Activated CD4-positive, alpha-beta memory T cell treated with anti-CD3 and anti-CD28 coated beads, Interleukin-2, amount 10 ng/mL, durations not matched to agents 7 days and 5 days (primary cell): ENCODE measurements at regions of chr19 and their contacts with region 1.

Region 1: GRCh38 chr19:6372594-6373095 is at the start of gene ALKBH7:
- DNase-seq: peak; percentile 97
- H3K4me3 Mint-ChIP-seq: peak within 1 kb of the TSS; percentile 87
- H3K27ac Mint-ChIP-seq: peak within 1 kb of the TSS; percentile 94
- H3K4me1 Mint-ChIP-seq: peaks cover 13% of the 10 kb centered on the region
- H3K27me3 Mint-ChIP-seq: no peaks in the 10 kb centered on the region
- total RNA-seq, gene ALKBH7: 52.0 to 52.5 TPM

Region 2: GRCh38 chr19:5850189-5850588 is 522.5 kb before region 1 on chr19:
- CTCF ChIA-PET with region 1: no interaction called
- POLR2A ChIA-PET with region 1: no interaction called
- DNase-seq: no peak
- H3K4me3 Mint-ChIP-seq: no peak overlapping the region
- H3K27ac Mint-ChIP-seq: no peak overlapping the region
- H3K4me1 Mint-ChIP-seq: no peaks in the 10 kb centered on the region
- H3K27me3 Mint-ChIP-seq: peaks cover 4% of the 10 kb centered on the region

Region 3: GRCh38 chr19:6362027-6362350 is 10.7 kb before region 1 on chr19:
- CTCF ChIA-PET with region 1: interaction called, 8 read pairs
- POLR2A ChIA-PET with region 1: interaction called, 34 read pairs
- DNase-seq: no peak
- H3K4me3 Mint-ChIP-seq: peak overlapping the region; percentile 87
- H3K27ac Mint-ChIP-seq: peak overlapping the region; percentile 93
- H3K4me1 Mint-ChIP-seq: peaks cover 18% of the 10 kb centered on the region
- H3K27me3 Mint-ChIP-seq: no peaks in the 10 kb centered on the region

Region 4: DNA sequence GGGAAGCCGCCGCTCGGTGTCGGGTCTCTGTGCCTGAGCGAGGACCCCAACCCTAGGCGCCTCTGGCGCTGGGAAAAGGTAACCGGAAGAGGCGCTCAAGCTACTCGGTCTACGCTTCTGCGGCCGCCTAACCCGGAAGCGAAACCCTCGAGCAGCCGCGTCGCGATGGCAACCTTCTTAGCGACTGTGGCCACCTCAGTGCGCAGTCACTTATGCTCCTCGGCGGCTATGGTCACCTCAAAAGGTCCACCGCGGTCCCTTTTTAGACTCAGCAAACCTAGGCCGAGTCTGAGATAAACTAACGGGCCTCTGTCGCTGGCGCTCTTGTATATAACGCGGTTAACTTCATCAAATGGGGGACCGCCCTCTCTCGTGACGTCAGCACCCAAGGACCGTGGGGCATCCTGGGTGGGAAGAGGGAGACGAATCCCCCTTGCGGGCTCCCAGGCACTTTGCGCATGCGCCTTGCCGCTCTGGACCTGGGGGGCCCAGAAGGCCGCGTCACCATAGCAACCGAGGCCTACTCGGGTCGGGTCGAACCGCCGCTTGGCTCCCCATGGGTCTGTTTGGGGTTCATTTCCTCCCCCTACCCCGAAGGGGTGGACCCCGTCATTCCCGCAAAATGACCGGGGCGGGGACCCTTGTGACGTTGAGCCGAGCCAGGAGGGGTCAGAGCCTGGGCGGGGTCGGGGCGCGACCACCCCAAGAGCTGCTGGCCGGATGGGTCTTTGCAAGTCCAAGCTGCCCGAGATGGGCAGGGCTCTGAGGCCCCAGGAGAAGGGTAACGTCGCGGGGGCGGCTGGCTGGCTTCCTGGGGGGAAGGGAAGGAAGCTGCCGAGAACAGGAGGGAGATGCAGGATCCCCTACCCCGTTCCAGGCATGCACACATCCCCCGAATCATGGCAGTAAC is 20.7 kb after region 1 on chr19 and contains the start of gene GTF2F1:
- CTCF ChIA-PET with region 1: no interaction called
- POLR2A ChIA-PET with region 1: interaction called, 15 read pairs
- DNase-seq: peak; percentile 91
- H3K4me3 Mint-ChIP-seq: peak within 1 kb of the TSS; percentile 94
- H3K27ac Mint-ChIP-seq: peak within 1 kb of the TSS; percentile 93
- H3K4me1 Mint-ChIP-seq: peaks cover 26% of the 10 kb centered on the region
- H3K27me3 Mint-ChIP-seq: no peaks in the 10 kb centered on the region
- total RNA-seq, gene GTF2F1: 75.5 to 79.8 TPM

Region 5: GRCh38 chr19:6424939-6425731 is 52.5 kb after region 1 on chr19:
- CTCF ChIA-PET with region 1: interaction called, 5 read pairs
- POLR2A ChIA-PET with region 1: interaction called, 11 read pairs
- DNase-seq: peak; percentile 100
- H3K4me3 Mint-ChIP-seq: peak overlapping the region; percentile 71
- H3K27ac Mint-ChIP-seq: peak overlapping the region; percentile 80
- H3K4me1 Mint-ChIP-seq: peaks cover 40% of the 10 kb centered on the region
- H3K27me3 Mint-ChIP-seq: no peaks in the 10 kb centered on the region

Region 6: DNA sequence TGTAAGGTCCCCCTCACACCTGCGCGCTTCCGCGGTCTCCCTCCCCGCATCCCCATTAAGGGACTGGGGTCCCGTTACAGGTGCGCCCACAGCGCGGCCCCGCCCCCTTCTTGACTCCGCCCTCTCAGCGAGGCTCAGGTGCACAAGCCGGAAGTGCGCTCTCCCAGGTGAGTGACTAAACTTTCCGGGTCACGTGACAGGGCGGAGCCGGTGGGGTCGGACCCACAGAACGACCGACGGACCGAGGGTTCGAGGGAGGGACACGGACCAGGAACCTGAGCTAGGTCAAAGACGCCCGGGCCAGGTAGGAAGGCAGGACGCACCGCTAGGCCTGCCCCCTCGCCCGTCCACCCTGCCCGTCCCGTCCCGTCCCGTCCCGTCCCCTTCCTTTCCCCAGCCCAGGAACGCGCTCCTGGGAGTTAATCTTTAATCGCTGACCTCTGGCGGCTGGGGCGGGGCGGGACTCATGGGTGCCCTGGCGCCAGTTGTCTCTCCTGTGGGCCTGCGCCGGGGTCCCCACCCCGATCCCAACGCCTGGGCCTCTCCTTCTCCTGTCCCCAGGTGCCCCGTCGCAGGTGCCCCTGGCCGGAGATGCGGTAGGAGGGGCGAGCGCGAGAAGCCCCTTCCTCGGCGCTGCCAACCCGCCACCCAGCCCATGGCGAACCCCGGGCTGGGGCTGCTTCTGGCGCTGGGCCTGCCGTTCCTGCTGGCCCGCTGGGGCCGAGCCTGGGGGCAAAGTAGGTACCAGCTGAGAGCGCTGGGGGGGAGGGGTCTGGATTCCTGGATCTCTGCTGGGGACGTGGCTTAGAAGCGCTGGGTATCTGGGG is 91.6 kb after region 1 on chr19 and contains the start of gene CRB3:
- CTCF ChIA-PET with region 1: no interaction called
- POLR2A ChIA-PET with region 1: no interaction called
- DNase-seq: peak; percentile 21
- H3K4me3 Mint-ChIP-seq: no peak within 1 kb of the TSS
- H3K27ac Mint-ChIP-seq: no peak within 1 kb of the TSS
- H3K4me1 Mint-ChIP-seq: peaks cover 9% of the 10 kb centered on the region
- H3K27me3 Mint-ChIP-seq: no peaks in the 10 kb centered on the region
- total RNA-seq, gene CRB3: 0.63 to 0.93 TPM